ENCODE measurements at regions of chr10 and their contacts with region 1.

Region 1: GRCh38 chr10:113802997-113803396 is 50.9 kb downstream of the DCLRE1A start:
- DNase-seq: no peak
- H3K4me3 Mint-ChIP-seq: no peak overlapping the region
- H3K27ac Mint-ChIP-seq: no peak overlapping the region
- H3K4me1 Mint-ChIP-seq: no peaks in the 10 kb centered on the region
- H3K27me3 Mint-ChIP-seq: peaks cover 14% of the 10 kb centered on the region

Region 2: GRCh38 chr10:114103284-114103683 is 300.3 kb after region 1 on chr10:
- CTCF ChIA-PET with region 1: interaction called, 93 read pairs
- POLR2A ChIA-PET with region 1: no interaction called
- intact Hi-C with region 1: loop called (anchors 1 kb)
- DNase-seq: no peak
- H3K4me3 Mint-ChIP-seq: no peak overlapping the region
- H3K27ac Mint-ChIP-seq: no peak overlapping the region
- H3K4me1 Mint-ChIP-seq: peaks cover 25% of the 10 kb centered on the region
- H3K27me3 Mint-ChIP-seq: peaks cover 26% of the 10 kb centered on the region

Region 3: GRCh38 chr10:114110174-114110972 is 307.4 kb after region 1 on chr10:
- CTCF ChIA-PET with region 1: interaction called, 93 read pairs
- POLR2A ChIA-PET with region 1: no interaction called
- intact Hi-C with region 1: no loop called
- DNase-seq: no peak
- H3K4me3 Mint-ChIP-seq: no peak overlapping the region
- H3K27ac Mint-ChIP-seq: no peak overlapping the region
- H3K4me1 Mint-ChIP-seq: no peaks in the 10 kb centered on the region
- H3K27me3 Mint-ChIP-seq: no peaks in the 10 kb centered on the region

Measured in activated CD4-positive, alpha-beta memory T cell treated with anti-CD3 and anti-CD28 coated beads for 36 hours (primary cell).